Endothelial cell of umbilical vein (primary cell): ENCODE measurements at regions of chr16 and their contacts with region 1.

Region 1: GRCh38 chr16:23678430-23679273 is at the start of gene PLK1:
- DNase-seq: peak; percentile 84
- H3K4me3 ChIP-seq: peak within 1 kb of the TSS; percentile 55 to 77 (median 68)
- H3K27ac ChIP-seq: peak within 1 kb of the TSS; percentile 4
- H3K4me1 ChIP-seq: peaks cover 27% of the 10 kb centered on the region
- H3K27me3 ChIP-seq: no peaks in the 10 kb centered on the region
- CTCF ChIP-seq: peak in 1 of 2 donors; percentile 33
- POLR2A ChIP-seq: no peak
- total RNA-seq, gene PLK1: 100 and 109 TPM in 2 replicates

Region 2: DNA sequence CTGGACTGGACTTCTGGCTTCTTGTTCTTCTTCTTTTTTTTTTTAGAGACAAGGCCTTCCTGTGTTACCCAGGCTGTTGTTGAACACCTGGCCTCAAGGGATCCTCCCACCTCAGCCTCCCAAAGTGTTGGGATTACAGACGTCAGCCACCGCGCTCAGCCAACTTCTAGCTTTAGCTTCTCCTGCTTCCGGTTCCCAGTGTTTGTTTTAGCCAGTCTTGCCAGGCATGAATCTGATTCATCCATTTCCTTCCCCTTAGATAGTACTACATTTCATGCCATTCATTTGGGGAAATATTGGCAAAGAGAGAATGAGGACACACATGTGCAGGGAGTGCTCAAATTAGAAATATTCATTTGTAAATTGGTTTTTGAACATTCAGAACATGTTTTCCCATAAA is 70.5 kb before region 1 on chr16:
- CTCF ChIA-PET with region 1: no interaction called
- POLR2A ChIA-PET with region 1: no interaction called
- dilution Hi-C with region 1: no loop called
- intact Hi-C with region 1: loop called (anchors 1 kb)
- DNase-seq: peak; percentile 93
- H3K4me3 ChIP-seq: peak overlapping the region in 1 of 3 experiments; percentile 28
- H3K27ac ChIP-seq: peak overlapping the region; percentile 96
- H3K4me1 ChIP-seq: peaks cover 13% of the 10 kb centered on the region
- H3K27me3 ChIP-seq: no peaks in the 10 kb centered on the region
- CTCF ChIP-seq: no peak
- POLR2A ChIP-seq: peak; percentile 38

Region 3: GRCh38 chr16:23700509-23700908 is 21.9 kb after region 1 on chr16:
- CTCF ChIA-PET with region 1: no interaction called
- POLR2A ChIA-PET with region 1: no interaction called
- dilution Hi-C with region 1: no loop called
- intact Hi-C with region 1: no loop called
- DNase-seq: no peak
- H3K4me3 ChIP-seq: no peak overlapping the region
- H3K27ac ChIP-seq: no peak overlapping the region
- H3K4me1 ChIP-seq: no peaks in the 10 kb centered on the region
- H3K27me3 ChIP-seq: peaks cover 1 to 2% of the 10 kb centered on the region in 2 experiments
- CTCF ChIP-seq: no peak
- POLR2A ChIP-seq: no peak

Region 4: DNA sequence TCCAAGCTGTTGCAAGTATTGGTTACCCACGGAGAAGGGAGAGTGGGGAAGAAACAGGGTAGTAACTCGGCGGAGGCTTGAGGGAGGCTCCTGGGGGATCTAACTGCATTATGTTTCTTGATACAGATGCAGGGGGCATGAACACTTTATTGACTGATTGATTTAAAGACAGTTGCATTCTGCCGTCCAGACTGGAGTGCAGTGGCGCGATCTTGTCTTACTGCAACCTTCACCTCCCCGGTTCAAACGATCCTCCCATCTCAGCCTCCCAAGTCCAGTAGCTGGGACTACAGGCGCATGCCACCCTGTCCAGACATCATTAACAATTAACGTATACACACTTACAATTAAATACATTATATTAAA is 49.4 kb after region 1 on chr16:
- CTCF ChIA-PET with region 1: interaction called, 21 read pairs
- POLR2A ChIA-PET with region 1: no interaction called
- dilution Hi-C with region 1: no loop called
- intact Hi-C with region 1: no loop called
- DNase-seq: no peak
- H3K4me3 ChIP-seq: no peak overlapping the region
- H3K27ac ChIP-seq: no peak overlapping the region
- H3K4me1 ChIP-seq: no peaks in the 10 kb centered on the region
- H3K27me3 ChIP-seq: no peaks in the 10 kb centered on the region
- CTCF ChIP-seq: no peak
- POLR2A ChIP-seq: no peak